A673 (cell line): ENCODE measurements at regions of chr10 and their contacts with region 1.

Region 1: GRCh38 chr10:93816123-93816747 is 58.5 kb downstream of the LGI1 start:
- DNase-seq: peak; percentile 83
- H3K4me3 ChIP-seq: no peak overlapping the region
- H3K27ac ChIP-seq: no peak overlapping the region
- H3K4me1 ChIP-seq: peaks cover 10% of the 10 kb centered on the region
- H3K27me3 ChIP-seq: no peaks in the 10 kb centered on the region
- CTCF ChIP-seq: peak; percentile 72

Region 2: DNA sequence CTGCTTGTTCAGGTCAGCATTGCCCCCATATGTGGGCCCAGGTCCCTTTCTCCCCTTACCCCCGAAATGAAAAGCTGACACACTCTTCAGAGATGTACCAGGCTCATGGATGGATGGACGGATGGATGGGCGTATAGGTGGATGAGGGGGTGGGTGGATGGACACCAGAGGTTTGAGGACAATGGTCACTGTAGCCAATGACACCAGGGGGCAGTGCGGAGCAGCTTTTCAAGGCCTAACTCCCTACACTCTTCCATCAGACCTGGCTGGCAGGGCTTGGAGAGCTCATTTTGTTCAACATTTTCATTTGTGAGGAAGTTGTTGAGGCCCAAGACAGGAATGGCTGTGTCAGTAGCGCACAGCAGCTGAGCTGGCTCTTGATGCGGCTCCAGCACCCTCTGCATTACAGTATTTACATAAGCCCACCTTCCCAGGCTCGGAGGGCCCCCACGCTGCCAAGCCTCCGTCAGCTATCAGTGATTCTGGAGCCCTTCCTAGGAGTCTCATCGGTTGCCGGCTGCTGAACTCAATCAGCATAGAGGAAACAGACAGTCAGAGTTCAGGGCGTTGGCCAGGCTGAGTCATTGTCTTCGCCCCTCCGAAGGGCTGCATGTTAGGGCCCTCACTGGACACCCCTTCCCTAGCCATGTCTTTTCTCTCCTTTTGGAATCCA is 261.3 kb before region 1 on chr10:
- CTCF ChIA-PET with region 1: interaction called, 11 read pairs
- POLR2A ChIA-PET with region 1: no interaction called
- intact Hi-C with region 1: loop called (anchors 2 kb)
- DNase-seq: peak; percentile 76
- H3K4me3 ChIP-seq: no peak overlapping the region
- H3K27ac ChIP-seq: no peak overlapping the region
- H3K4me1 ChIP-seq: no peaks in the 10 kb centered on the region
- H3K27me3 ChIP-seq: no peaks in the 10 kb centered on the region
- CTCF ChIP-seq: peak; percentile 79

Region 3: DNA sequence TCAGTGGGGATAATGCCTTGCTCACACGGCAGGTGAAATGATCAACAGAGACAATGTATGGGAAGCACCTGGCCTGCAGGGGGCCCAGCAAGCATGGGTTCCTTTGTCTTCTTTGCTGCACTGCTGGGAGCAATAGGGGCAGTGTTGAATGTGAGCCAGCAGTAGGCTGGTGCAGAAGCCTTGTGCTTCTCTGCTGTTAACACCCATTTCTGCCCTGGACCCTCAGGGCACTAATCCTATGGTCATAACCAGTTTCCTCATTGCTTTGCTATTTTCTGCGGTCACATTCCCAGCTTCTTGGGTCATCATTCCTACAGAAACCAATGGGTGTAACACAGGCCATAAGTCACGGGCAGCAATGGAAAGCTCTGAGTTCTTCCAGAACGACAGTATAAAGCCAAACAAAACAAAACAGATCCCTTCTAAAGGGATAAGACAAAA is 69.4 kb before region 1 on chr10:
- CTCF ChIA-PET with region 1: interaction called, 15 read pairs
- POLR2A ChIA-PET with region 1: no interaction called
- intact Hi-C with region 1: loop called (anchors 5 kb)
- DNase-seq: no peak
- H3K4me3 ChIP-seq: no peak overlapping the region
- H3K27ac ChIP-seq: no peak overlapping the region
- H3K4me1 ChIP-seq: no peaks in the 10 kb centered on the region
- H3K27me3 ChIP-seq: peaks cover 5% of the 10 kb centered on the region
- CTCF ChIP-seq: no peak

Region 4: DNA sequence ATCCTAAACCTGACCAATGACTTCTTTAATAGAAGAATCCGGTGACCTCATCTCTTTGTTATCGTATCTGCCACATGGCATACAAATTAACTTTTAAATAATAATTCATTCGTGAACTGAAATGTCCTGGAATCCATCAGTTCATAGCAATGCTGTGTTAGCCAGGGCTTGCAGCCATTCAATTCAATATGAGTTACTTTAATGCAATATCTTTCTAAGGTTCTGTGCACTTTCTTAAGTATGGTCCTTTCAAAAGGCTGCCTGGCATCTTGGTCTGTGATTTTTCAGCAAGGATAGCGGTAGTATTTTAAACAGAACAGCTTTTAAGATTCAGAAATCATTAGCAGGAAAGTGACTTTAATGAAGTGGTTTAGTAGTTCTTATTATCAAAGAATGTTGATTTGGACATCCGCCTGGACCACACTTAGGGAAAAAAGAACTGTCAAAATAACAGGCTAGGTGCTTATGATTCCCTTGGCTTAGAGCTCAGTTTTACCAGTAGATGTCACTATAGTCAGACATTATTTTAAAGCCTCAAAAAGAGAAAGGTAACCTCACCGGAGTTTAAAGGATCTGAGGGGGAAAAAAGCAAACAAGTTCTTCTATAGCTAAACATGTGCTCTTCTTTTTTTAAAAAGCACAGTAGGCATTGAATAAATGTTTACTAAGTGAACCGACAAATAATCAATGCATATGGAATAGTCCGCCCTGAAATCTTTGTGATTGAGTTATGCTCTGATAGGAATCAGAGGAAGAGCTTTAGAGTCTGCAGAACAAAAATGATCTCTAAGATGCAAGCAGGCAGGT is 100.2 kb after region 1 on chr10:
- CTCF ChIA-PET with region 1: interaction called, 5 read pairs
- POLR2A ChIA-PET with region 1: no interaction called
- intact Hi-C with region 1: loop called (anchors 2 kb)
- DNase-seq: peak; percentile 30
- H3K4me3 ChIP-seq: no peak overlapping the region
- H3K27ac ChIP-seq: no peak overlapping the region
- H3K4me1 ChIP-seq: no peaks in the 10 kb centered on the region
- H3K27me3 ChIP-seq: no peaks in the 10 kb centered on the region
- CTCF ChIP-seq: peak; percentile 61

Region 5: GRCh38 chr10:94439275-94439861 is 623.1 kb after region 1 on chr10:
- CTCF ChIA-PET with region 1: no interaction called
- POLR2A ChIA-PET with region 1: no interaction called
- intact Hi-C with region 1: loop called (anchors 10 kb)
- DNase-seq: peak; percentile 12
- H3K4me3 ChIP-seq: no peak overlapping the region
- H3K27ac ChIP-seq: no peak overlapping the region
- H3K4me1 ChIP-seq: no peaks in the 10 kb centered on the region
- H3K27me3 ChIP-seq: peaks cover 6% of the 10 kb centered on the region
- CTCF ChIP-seq: no peak